Endothelial cell of umbilical vein (primary cell): ENCODE measurements at regions of chrX and their contacts with region 1.

Region 1: GRCh38 chrX:118459494-118459893 is 36.1 kb upstream of the DOCK11 start:
- DNase-seq: peak; percentile 12
- H3K4me3 ChIP-seq: no peak overlapping the region
- H3K27ac ChIP-seq: no peak overlapping the region
- H3K4me1 ChIP-seq: no peaks in the 10 kb centered on the region
- H3K27me3 ChIP-seq: no peaks in the 10 kb centered on the region
- CTCF ChIP-seq: peak in 1 of 2 donors; percentile 29
- POLR2A ChIP-seq: no peak

Region 2: GRCh38 chrX:118474586-118474985 is 15.1 kb after region 1 on chrX:
- CTCF ChIA-PET with region 1: interaction called, 10 read pairs
- POLR2A ChIA-PET with region 1: no interaction called
- dilution Hi-C with region 1: no loop called
- intact Hi-C with region 1: no loop called
- DNase-seq: no peak
- H3K4me3 ChIP-seq: no peak overlapping the region
- H3K27ac ChIP-seq: no peak overlapping the region
- H3K4me1 ChIP-seq: no peaks in the 10 kb centered on the region
- H3K27me3 ChIP-seq: no peaks in the 10 kb centered on the region
- CTCF ChIP-seq: no peak
- POLR2A ChIP-seq: no peak